AG04449 (cell line): ENCODE measurements at regions of chr11 and their contacts with region 1.

Region 1: DNA sequence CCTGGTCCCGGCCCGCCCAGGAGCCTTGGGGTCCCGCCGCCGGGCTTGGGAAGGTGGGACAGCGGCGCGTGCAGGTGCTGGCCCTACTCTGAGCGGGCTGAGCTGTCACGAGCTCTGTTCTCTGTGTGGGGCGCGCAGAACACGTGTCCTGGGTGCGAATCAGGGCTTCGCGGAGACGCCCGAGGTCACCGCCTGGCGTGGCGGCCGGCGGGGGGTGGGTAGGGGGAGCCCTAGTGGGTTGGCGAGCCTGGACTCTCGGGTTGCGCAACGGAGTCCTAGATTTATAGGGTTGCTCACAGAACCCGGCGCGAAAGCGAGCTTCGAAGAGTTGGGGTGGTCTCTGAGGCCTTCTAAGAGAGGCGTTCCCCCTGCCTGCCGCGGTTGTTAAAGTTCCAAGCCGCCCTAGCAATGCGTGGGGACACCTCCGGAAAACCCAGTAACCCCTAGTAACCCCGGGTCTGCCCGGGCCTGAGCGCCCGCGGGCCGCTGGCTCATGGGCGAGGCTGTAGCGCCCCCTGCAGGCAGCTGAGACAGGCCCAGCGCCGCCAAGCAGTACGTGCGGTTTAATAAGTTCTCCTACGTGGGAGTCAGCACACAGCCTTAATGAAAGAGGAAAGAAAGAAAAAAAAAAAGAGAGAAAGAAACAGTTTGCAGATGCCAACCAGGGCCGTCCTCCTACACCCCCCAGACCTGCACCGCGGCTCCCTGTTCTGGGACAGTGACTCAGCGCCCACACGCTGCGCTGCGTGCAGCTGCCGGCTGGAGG is 2.8 kb downstream of the ADM start:
- DNase-seq: no peak
- H3K4me3 ChIP-seq: peak overlapping the region; percentile 100
- CTCF ChIP-seq: peak; percentile 83

Region 2: DNA sequence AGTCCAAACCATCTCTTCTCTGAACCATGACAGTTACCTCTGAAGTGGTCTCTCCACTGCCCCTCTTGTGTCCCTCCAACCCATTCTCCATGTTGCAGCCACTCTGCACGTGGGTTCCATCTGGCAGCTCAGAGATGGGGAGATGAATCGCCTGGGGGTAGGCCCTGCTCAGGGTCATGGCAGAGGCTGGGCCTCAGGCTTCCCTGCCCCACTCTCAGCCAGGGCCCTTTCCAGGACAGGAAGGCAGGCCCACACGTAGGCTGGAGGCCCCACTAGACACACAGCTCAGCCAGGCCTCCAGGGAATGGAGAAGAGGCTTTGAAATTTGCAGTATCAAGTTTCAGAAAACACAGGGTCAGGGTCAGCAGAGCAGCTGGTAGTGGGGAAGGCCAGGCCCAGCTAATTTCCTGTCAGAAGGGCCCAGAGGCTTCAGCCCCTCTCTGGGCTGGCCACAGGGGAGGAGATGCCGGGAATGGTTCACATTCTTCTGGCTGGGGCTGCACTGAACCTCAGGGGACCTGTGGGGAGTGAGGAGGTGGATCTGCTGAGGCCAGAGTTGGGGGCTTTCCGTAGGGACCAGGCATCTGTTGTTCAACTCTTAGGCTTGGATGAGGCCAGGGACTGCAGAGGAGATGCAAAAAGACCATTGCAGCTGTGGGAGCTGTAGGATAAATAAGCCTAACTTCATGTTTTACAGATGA is 542.2 kb before region 1 on chr11:
- CTCF ChIA-PET with region 1: no interaction called
- POLR2A ChIA-PET with region 1: interaction called, 36 read pairs
- DNase-seq: peak; percentile 97
- H3K4me3 ChIP-seq: no peak overlapping the region
- CTCF ChIP-seq: no peak

Region 3: DNA sequence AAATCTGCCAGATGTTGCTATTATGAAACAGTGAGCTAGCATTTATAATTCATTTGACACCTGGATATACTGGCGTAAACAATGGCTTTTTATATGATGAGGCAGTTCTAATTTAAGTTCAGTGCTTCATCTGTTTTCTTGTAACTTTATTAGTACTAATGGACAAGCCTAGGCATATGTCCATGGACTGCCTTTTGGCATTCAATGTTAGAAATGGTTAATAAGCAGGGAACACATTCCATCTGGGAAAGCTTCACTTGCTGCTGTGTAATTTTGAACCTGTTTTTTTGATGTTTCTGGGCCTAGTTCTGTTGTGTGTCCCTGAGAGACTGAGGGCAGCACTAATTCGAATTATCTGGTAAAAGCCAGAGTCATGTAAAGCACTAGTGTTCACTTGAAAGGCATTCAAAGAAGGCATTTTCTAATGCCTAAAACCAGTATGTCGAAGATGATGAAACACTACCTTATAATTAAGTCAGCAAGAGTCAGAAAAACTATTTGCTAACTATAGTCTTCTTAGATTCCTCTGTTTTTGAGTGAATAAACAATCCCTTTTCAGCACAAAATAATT is 505.2 kb before region 1 on chr11:
- CTCF ChIA-PET with region 1: no interaction called
- POLR2A ChIA-PET with region 1: interaction called, 10 read pairs
- DNase-seq: peak; percentile 93
- H3K4me3 ChIP-seq: no peak overlapping the region
- CTCF ChIP-seq: no peak

Region 4: GRCh38 chr11:10181811-10182210 is 125.8 kb before region 1 on chr11:
- CTCF ChIA-PET with region 1: interaction called, 39 read pairs
- POLR2A ChIA-PET with region 1: interaction called, 26 read pairs
- DNase-seq: no peak
- H3K4me3 ChIP-seq: no peak overlapping the region
- CTCF ChIP-seq: no peak

Region 5: GRCh38 chr11:10233581-10233980 is 74.0 kb before region 1 on chr11:
- CTCF ChIA-PET with region 1: no interaction called
- POLR2A ChIA-PET with region 1: interaction called, 13 read pairs
- DNase-seq: peak; percentile 70
- H3K4me3 ChIP-seq: no peak overlapping the region
- CTCF ChIP-seq: no peak

Region 6: DNA sequence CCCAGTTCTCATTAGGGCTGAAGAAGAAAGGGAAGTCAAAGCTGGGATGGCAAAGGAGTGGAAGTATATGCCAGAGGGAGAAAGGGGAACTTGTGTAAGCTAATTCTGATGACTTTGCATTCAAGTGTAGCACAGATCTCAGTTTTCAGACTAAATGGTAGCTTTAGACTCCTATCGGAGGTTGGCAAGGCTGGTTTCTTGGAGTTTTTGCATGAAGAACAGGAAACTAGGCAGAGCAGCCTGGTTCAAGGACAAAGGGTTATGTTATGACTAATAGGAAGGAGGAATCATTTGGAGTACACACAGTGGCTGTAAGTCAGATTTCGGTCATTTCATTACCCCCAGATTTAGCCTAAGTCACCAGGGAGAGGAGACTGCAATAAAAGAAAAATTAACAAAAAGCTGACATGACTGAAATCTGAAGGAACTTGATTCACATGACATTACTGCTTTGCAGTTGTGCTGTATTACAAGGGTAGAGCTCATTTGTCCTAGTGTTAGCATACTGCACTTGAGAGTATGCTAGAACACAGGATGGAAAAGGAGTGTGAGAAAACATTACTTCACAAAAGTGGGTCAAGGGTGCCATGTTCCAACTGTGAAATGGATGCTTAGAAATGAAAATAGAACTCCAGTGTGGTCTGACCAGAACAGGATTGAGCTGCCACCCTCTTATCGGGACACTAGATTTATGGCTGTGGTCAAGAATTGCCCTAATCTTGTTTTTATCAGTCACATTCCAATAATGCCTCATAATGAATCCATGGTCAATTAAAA is 20.9 kb after region 1 on chr11:
- CTCF ChIA-PET with region 1: interaction called, 9 read pairs
- POLR2A ChIA-PET with region 1: interaction called, 34 read pairs
- DNase-seq: no peak
- H3K4me3 ChIP-seq: no peak overlapping the region
- CTCF ChIP-seq: no peak